Prostate gland (tissue), 2 donors: ENCODE measurements at regions of chr7 and their contacts with region 1.

Region 1: GRCh38 chr7:99631295-99632109 is 14.8 kb downstream of the ZSCAN25 start:
- DNase-seq: peak; percentile 50
- H3K4me3 ChIP-seq: no peak overlapping the region
- H3K27ac ChIP-seq: peak overlapping the region in 1 of 2 donors; percentile 12
- H3K4me1 ChIP-seq: no peaks in the 10 kb centered on the region
- H3K27me3 ChIP-seq: no peaks in the 10 kb centered on the region
- CTCF ChIP-seq: peak in 3 of 4 experiments; percentile 23 to 47 (median 42)
- POLR2A ChIP-seq: no peak

Region 2: DNA sequence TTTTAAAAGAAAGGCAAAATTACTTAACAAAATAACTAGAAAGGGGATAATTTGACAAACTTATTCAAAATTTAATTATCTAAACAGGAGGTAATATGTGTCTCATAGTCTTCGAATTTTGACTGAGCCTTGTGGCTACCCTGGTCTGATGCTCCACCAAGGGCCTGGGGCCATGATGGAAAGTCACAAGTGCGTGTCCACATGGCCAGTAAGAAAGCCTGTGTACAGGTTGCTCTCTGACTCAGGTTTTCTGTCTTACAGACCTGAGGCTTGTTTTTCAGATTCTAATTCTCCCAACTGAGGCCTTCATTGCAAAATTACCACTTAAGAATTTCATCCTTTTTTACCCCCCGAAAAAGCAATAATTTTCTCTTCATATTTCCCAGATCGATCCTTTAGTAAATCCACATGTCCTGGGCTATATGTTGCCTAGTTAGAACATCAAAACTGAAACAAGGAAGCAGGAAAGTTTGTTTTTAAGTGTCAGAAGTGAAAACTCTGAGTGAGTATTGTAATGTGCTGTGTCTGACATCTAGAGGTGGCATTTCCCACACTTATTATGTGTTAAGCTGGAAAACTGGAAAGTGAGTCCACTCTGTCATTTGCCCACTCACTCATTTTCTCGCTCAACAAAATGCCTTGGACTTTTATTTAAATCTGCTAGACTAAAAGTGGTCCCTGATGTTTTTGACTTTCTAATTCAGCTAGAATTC is 206.3 kb after region 1 on chr7:
- intact Hi-C with region 1: loop called (anchors 5 kb)
- DNase-seq: no peak
- H3K4me3 ChIP-seq: no peak overlapping the region
- H3K27ac ChIP-seq: peak overlapping the region; percentile 66 to 70
- H3K4me1 ChIP-seq: no peaks in the 10 kb centered on the region
- H3K27me3 ChIP-seq: no peaks in the 10 kb centered on the region
- CTCF ChIP-seq: peak in 2 of 4 experiments; percentile 53 to 60
- POLR2A ChIP-seq: no peak